ENCODE measurements at regions of chr5 and their contacts with region 1.

Region 1: GRCh38 chr5:142713121-142713706 is 27.3 kb upstream of the FGF1 start:
- DNase-seq: peak; percentile 87
- ATAC-seq: peak; percentile 93
- H3K4me3 ChIP-seq: peak overlapping the region; percentile 57 to 80
- H3K27ac ChIP-seq: peak overlapping the region; percentile 75
- H3K4me1 ChIP-seq: peaks cover 10% of the 10 kb centered on the region
- H3K27me3 ChIP-seq: no peaks in the 10 kb centered on the region
- CTCF ChIP-seq: peak; percentile 100

Region 2: GRCh38 chr5:142484860-142485259 is 228.4 kb before region 1 on chr5:
- CTCF ChIA-PET with region 1: no interaction called
- POLR2A ChIA-PET with region 1: no interaction called
- in situ Hi-C with region 1: no loop called
- intact Hi-C with region 1: no loop called
- DNase-seq: no peak
- ATAC-seq: no peak
- H3K4me3 ChIP-seq: no peak overlapping the region
- H3K27ac ChIP-seq: no peak overlapping the region
- H3K4me1 ChIP-seq: no peaks in the 10 kb centered on the region
- H3K27me3 ChIP-seq: no peaks in the 10 kb centered on the region
- CTCF ChIP-seq: no peak

Region 3: GRCh38 chr5:142655339-142656267 is 57.6 kb before region 1 on chr5:
- CTCF ChIA-PET with region 1: interaction called, 15 read pairs
- POLR2A ChIA-PET with region 1: no interaction called
- in situ Hi-C with region 1: no loop called
- intact Hi-C with region 1: no loop called
- DNase-seq: peak; percentile 45
- ATAC-seq: peak; percentile 95
- H3K4me3 ChIP-seq: no peak overlapping the region
- H3K27ac ChIP-seq: no peak overlapping the region
- H3K4me1 ChIP-seq: no peaks in the 10 kb centered on the region; the same call in 1 of the 2 replicates
- H3K27me3 ChIP-seq: no peaks in the 10 kb centered on the region
- CTCF ChIP-seq: peak; percentile 99

Region 4: GRCh38 chr5:142748568-142749249 is 35.5 kb after region 1 on chr5:
- CTCF ChIA-PET with region 1: interaction called, 15 read pairs
- POLR2A ChIA-PET with region 1: no interaction called
- in situ Hi-C with region 1: no loop called
- intact Hi-C with region 1: no loop called
- DNase-seq: peak; percentile 18
- ATAC-seq: peak; percentile 66; the same call in 1 of the 2 replicates
- H3K4me3 ChIP-seq: no peak overlapping the region
- H3K27ac ChIP-seq: no peak overlapping the region
- H3K4me1 ChIP-seq: no peaks in the 10 kb centered on the region
- H3K27me3 ChIP-seq: no peaks in the 10 kb centered on the region
- CTCF ChIP-seq: peak; percentile 63

Region 5: GRCh38 chr5:142769741-142770631 is 56.8 kb after region 1 on chr5 and contains the start of gene ARHGAP26:
- CTCF ChIA-PET with region 1: interaction called, 15 read pairs
- POLR2A ChIA-PET with region 1: no interaction called
- in situ Hi-C with region 1: no loop called
- intact Hi-C with region 1: no loop called
- DNase-seq: no peak
- ATAC-seq: peak; percentile 96
- H3K4me3 ChIP-seq: peak within 1 kb of the TSS; percentile 58 to 80
- H3K27ac ChIP-seq: peak within 1 kb of the TSS; percentile 94
- H3K4me1 ChIP-seq: peaks cover 22% of the 10 kb centered on the region
- H3K27me3 ChIP-seq: no peaks in the 10 kb centered on the region
- CTCF ChIP-seq: peak; percentile 48
- total RNA-seq, gene ARHGAP26: 65.5 TPM

Region 6: DNA sequence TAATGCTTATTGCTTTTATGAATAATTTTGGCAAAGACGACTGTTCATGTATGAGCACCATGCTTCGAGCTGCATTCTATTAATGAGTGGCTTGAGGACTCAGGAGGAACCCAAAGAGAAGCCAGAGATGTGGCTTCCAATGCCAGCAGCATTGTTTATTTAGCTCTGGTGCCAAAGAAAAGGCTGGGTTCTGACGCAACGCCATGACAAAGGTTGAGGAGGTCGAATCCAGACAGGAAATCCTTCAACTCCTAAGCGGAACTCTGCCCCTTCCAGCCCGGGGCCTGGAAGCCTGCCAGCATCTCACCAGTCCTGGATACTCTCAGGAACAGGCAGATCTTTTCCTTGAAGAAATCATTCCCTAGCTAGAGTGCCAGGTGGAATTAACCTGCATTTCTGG is 161.3 kb after region 1 on chr5:
- CTCF ChIA-PET with region 1: interaction called, 16 read pairs
- POLR2A ChIA-PET with region 1: no interaction called
- in situ Hi-C with region 1: no loop called
- intact Hi-C with region 1: no loop called
- DNase-seq: peak; percentile 39
- ATAC-seq: no peak
- H3K4me3 ChIP-seq: no peak overlapping the region
- H3K27ac ChIP-seq: peak overlapping the region; percentile 60; the same call in 1 of the 2 replicates
- H3K4me1 ChIP-seq: peaks cover 67% of the 10 kb centered on the region
- H3K27me3 ChIP-seq: no peaks in the 10 kb centered on the region
- CTCF ChIP-seq: no peak

Region 7: GRCh38 chr5:142881076-142881783 is 168.0 kb after region 1 on chr5:
- CTCF ChIA-PET with region 1: interaction called, 16 read pairs
- POLR2A ChIA-PET with region 1: no interaction called
- in situ Hi-C with region 1: no loop called
- intact Hi-C with region 1: loop called (anchors 1 kb)
- DNase-seq: no peak
- ATAC-seq: 0 out of 2 replicates have a peak, but pooled peaks have one; percentile 17
- H3K4me3 ChIP-seq: no peak overlapping the region
- H3K27ac ChIP-seq: 0 out of 2 replicates have a peak overlapping the region, but pooled peaks have one; percentile 40
- H3K4me1 ChIP-seq: peaks cover 21% of the 10 kb centered on the region
- H3K27me3 ChIP-seq: no peaks in the 10 kb centered on the region
- CTCF ChIP-seq: no peak

Region 8: GRCh38 chr5:142888469-142889085 is 175.4 kb after region 1 on chr5:
- CTCF ChIA-PET with region 1: interaction called, 35 read pairs
- POLR2A ChIA-PET with region 1: no interaction called
- in situ Hi-C with region 1: no loop called
- intact Hi-C with region 1: loop called (anchors 1 kb)
- DNase-seq: peak; percentile 27
- ATAC-seq: peak; percentile 81
- H3K4me3 ChIP-seq: no peak overlapping the region
- H3K27ac ChIP-seq: no peak overlapping the region
- H3K4me1 ChIP-seq: peaks cover 14% of the 10 kb centered on the region
- H3K27me3 ChIP-seq: no peaks in the 10 kb centered on the region
- CTCF ChIP-seq: peak; percentile 86